CD4-positive, alpha-beta T cell (primary cell): ENCODE measurements at regions of chr2 and their contacts with region 1.

Region 1: DNA sequence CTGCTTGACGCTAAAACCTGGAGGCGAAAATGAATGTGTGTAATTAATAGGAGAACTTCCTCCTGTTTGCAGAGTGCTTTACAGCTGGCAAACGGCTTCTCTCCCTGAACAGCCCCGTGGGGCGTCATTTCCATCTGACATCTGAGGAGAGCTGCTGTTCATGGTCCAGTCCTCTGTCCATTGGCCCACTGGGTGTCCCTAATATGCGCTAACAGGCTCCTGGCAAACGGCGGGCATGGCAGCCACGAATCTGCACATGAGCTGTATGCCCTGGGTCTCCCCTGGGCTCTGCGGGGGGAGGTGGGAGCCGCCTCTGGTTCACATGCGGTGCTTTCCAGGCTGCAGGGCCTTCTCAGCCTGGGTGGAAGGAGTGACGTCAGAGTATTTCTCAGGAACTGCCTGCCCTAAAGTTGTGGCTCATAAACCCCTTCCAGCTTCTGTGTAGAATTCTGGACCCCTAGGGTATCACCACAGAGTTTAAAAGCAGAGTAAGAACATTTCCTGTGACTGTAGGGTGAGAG is 73.2 kb downstream of the LRRFIP1 start:
- DNase-seq: peak in 11 of 14 experiments; percentile 35 to 92 (median 59)
- ATAC-seq: peak; percentile 67
- H3K4me3 ChIP-seq: no peak overlapping the region
- H3K4me3 Mint-ChIP-seq: peak overlapping the region; percentile 83
- H3K27ac ChIP-seq: peak overlapping the region; percentile 57 to 64
- H3K27ac Mint-ChIP-seq: peak overlapping the region; percentile 93
- H3K4me1 ChIP-seq: peaks cover 99% of the 10 kb centered on the region
- H3K4me1 Mint-ChIP-seq: peaks cover 98% of the 10 kb centered on the region
- H3K27me3 ChIP-seq: no peaks in the 10 kb centered on the region
- H3K27me3 Mint-ChIP-seq: no peaks in the 10 kb centered on the region
- CTCF ChIP-seq: no peak

Region 2: GRCh38 chr2:237686659-237687136 is 13.9 kb before region 1 on chr2:
- CTCF ChIA-PET with region 1: interaction called, 13 read pairs
- POLR2A ChIA-PET with region 1: interaction called, 43 read pairs
- intact Hi-C with region 1: no loop called
- DNase-seq: peak in 2 of 14 experiments; percentile 62 to 73
- ATAC-seq: no peak
- H3K4me3 ChIP-seq: no peak overlapping the region
- H3K4me3 Mint-ChIP-seq: no peak overlapping the region
- H3K27ac ChIP-seq: peak overlapping the region; percentile 89 to 96
- H3K27ac Mint-ChIP-seq: peak overlapping the region; percentile 98
- H3K4me1 ChIP-seq: peaks cover 62% of the 10 kb centered on the region
- H3K4me1 Mint-ChIP-seq: peaks cover 55% of the 10 kb centered on the region
- H3K27me3 ChIP-seq: no peaks in the 10 kb centered on the region
- H3K27me3 Mint-ChIP-seq: no peaks in the 10 kb centered on the region
- CTCF ChIP-seq: no peak

Region 3: GRCh38 chr2:237714690-237715458 is 14.3 kb after region 1 on chr2:
- CTCF ChIA-PET with region 1: interaction called, 4 read pairs
- POLR2A ChIA-PET with region 1: interaction called, 14 read pairs
- intact Hi-C with region 1: loop called in 1 of 2 experiments (anchors 2 kb)
- DNase-seq: no peak
- ATAC-seq: no peak
- H3K4me3 ChIP-seq: no peak overlapping the region
- H3K4me3 Mint-ChIP-seq: no peak overlapping the region
- H3K27ac ChIP-seq: no peak overlapping the region
- H3K27ac Mint-ChIP-seq: peak overlapping the region; percentile 46
- H3K4me1 ChIP-seq: peaks cover 34% of the 10 kb centered on the region
- H3K4me1 Mint-ChIP-seq: peaks cover 81% of the 10 kb centered on the region
- H3K27me3 ChIP-seq: no peaks in the 10 kb centered on the region
- H3K27me3 Mint-ChIP-seq: no peaks in the 10 kb centered on the region
- CTCF ChIP-seq: no peak

Region 4: GRCh38 chr2:237790353-237790752 is 89.8 kb after region 1 on chr2:
- CTCF ChIA-PET with region 1: no interaction called
- POLR2A ChIA-PET with region 1: no interaction called
- intact Hi-C with region 1: no loop called
- DNase-seq: no peak
- ATAC-seq: no peak
- H3K4me3 ChIP-seq: no peak overlapping the region
- H3K4me3 Mint-ChIP-seq: no peak overlapping the region
- H3K27ac ChIP-seq: no peak overlapping the region
- H3K27ac Mint-ChIP-seq: no peak overlapping the region
- H3K4me1 ChIP-seq: no peaks in the 10 kb centered on the region
- H3K4me1 Mint-ChIP-seq: no peaks in the 10 kb centered on the region
- H3K27me3 ChIP-seq: no peaks in the 10 kb centered on the region
- H3K27me3 Mint-ChIP-seq: no peaks in the 10 kb centered on the region
- CTCF ChIP-seq: no peak

Region 5: DNA sequence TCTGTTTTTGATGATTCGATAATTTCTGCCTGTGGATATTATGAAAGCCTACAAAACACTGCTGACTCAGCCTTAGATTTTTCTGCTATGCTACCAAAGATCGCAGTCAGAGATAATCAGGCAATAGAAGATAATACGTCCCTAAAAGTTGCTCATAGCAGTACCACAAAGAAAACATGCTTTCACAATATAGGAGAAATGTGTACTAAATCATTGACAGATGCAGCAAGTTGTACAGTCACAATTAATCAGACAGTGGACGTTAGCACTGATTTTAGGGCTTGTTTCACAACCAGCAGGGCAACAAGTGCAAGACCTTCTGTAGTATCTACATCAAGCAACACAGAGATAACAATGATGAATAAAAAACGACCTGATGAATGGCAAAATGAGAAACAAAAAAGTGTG is 117.5 kb after region 1 on chr2:
- CTCF ChIA-PET with region 1: no interaction called
- POLR2A ChIA-PET with region 1: no interaction called
- intact Hi-C with region 1: no loop called
- DNase-seq: no peak
- ATAC-seq: no peak
- H3K4me3 ChIP-seq: no peak overlapping the region
- H3K4me3 Mint-ChIP-seq: no peak overlapping the region
- H3K27ac ChIP-seq: no peak overlapping the region
- H3K27ac Mint-ChIP-seq: no peak overlapping the region
- H3K4me1 ChIP-seq: no peaks in the 10 kb centered on the region
- H3K4me1 Mint-ChIP-seq: peaks cover 5% of the 10 kb centered on the region
- H3K27me3 ChIP-seq: no peaks in the 10 kb centered on the region
- H3K27me3 Mint-ChIP-seq: no peaks in the 10 kb centered on the region
- CTCF ChIP-seq: no peak

Region 6: DNA sequence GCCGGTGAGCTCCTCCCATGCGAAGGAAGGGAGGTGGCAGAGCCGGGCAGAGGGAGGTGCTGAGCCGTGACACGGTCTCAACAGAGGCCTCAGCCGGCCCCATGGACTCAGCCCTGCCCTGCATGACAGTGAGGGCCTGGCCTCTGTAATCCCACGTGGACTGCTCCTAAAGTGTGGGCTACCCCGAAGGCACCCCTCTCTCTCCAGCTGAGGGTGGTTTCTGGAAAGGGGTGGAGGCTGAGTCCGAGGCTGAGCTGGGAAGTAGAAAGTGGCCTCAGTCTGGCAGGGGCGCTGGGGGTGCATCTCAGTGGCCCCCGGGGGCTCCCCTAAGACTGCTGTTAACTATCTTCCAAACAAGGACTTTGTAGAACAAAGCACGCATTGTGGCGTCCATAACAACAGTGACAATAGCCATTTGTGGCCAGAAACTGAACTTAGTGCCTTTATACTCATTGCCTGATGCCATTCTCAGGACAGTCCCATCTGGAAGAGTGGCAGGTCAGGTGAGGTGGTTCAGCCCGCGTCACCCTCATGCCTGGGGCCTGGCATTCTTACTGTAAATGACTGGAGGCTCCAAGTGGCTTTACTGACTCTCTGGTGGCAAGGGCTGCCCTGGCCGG is 1339.7 kb after region 1 on chr2:
- CTCF ChIA-PET with region 1: no interaction called
- POLR2A ChIA-PET with region 1: no interaction called
- intact Hi-C with region 1: no loop called
- DNase-seq: no peak
- ATAC-seq: no peak
- H3K4me3 ChIP-seq: no peak overlapping the region
- H3K4me3 Mint-ChIP-seq: no peak overlapping the region
- H3K27ac ChIP-seq: no peak overlapping the region
- H3K27ac Mint-ChIP-seq: no peak overlapping the region
- H3K4me1 ChIP-seq: peaks cover 4% of the 10 kb centered on the region
- H3K4me1 Mint-ChIP-seq: no peaks in the 10 kb centered on the region
- H3K27me3 ChIP-seq: no peaks in the 10 kb centered on the region
- H3K27me3 Mint-ChIP-seq: no peaks in the 10 kb centered on the region
- CTCF ChIP-seq: no peak